GM12878 (cell line): ENCODE measurements at regions of chr6 and their contacts with region 1.

Region 1: DNA sequence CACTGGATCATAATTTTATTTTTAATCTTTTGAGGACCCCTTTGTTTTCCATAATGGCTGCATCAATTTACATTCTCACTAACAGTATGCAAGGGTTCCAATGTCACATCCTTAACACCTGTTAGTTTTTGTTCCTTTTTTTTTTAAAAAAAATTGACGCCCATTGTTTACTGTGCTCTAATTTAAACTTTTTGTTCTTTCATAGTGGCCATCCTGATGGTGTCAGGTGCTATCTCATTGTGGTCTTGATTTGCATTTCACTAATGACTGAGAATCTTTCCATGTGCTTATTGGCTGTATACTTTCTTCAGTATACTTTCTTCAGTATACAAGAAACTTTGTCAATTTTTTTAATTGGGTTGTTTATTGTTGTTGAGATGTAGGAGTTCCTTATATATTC is 347.0 kb downstream of the RNGTT start:
- DNase-seq: no peak
- ATAC-seq: peak; percentile 78
- H3K4me3 ChIP-seq: peak overlapping the region; percentile 9; the same call in 1 of the 2 replicates
- H3K27ac ChIP-seq: peak overlapping the region; percentile 62
- H3K4me1 ChIP-seq: peaks cover 15% of the 10 kb centered on the region; the same call in 1 of the 2 replicates
- H3K27me3 ChIP-seq: no peaks in the 10 kb centered on the region
- CTCF ChIP-seq: no peak
- EP300 ChIP-seq: peak; percentile 44 to 90; a peak in 3 of 4 replicates
- POLR2A ChIP-seq: no peak
- RAD21 ChIP-seq: no peak

Region 2: DNA sequence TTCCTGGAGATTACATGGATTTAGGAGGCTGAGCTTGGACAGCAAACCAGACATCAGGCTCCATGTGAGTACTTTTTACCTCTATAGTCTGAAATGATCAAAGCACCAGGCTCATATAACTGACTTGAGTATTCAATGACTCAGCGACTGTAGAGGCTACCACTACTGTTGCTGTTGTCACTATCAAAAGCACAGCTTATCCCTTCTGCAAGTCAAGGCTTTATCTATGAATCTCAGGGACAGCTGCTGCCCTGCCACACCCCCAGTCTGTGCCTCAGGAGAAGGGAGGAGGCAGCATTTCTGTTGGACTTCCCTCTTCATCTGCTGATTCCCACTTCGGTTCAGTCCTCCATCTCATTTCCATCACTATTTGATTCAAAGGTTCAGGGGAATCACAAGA is 369.7 kb before region 1 on chr6:
- CTCF ChIA-PET with region 1: no interaction called
- POLR2A ChIA-PET with region 1: no interaction called
- RAD21 ChIA-PET with region 1: no interaction called
- SMC1A ChIA-PET with region 1: no interaction called
- in situ Hi-C with region 1: no loop called
- intact Hi-C with region 1: loop called (anchors 10 kb)
- DNase-seq: no peak
- ATAC-seq: no peak
- H3K4me3 ChIP-seq: no peak overlapping the region
- H3K27ac ChIP-seq: no peak overlapping the region
- H3K4me1 ChIP-seq: no peaks in the 10 kb centered on the region
- H3K27me3 ChIP-seq: no peaks in the 10 kb centered on the region
- CTCF ChIP-seq: no peak
- EP300 ChIP-seq: no peak
- POLR2A ChIP-seq: no peak
- RAD21 ChIP-seq: no peak

Region 3: DNA sequence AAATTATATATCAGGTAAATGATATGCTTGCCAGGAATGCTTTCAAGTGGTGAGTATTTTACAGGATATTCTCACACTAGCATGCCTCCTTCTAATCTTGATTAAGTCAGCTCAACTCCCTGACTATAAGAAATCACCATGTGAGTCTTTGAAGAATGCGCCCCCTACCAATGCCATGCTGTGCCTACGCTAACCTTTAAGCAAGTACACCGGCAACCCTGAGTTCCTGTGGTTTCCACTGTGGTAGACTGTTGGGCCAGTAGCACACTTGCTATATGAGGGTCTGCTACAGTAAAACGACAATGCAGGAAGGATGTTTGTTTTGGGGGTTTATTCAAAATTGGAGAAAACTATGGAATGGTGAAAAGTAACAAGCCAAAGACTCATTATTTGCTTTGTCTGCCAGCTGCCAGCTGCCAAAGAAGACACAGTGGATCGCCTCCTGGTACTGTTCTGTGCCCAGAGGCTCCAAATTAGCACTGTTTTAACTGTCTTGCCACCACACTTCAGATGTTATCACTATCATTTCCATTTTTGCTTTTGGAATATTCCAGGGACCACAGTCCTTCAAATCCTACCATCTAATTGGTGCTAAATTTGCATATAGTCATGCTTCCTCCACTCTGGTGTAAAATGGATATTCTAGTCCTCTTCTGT is 13.6 kb after region 1 on chr6:
- CTCF ChIA-PET with region 1: interaction called, 8 read pairs
- POLR2A ChIA-PET with region 1: interaction called, 5 read pairs
- RAD21 ChIA-PET with region 1: no interaction called
- SMC1A ChIA-PET with region 1: interaction called, 21 read pairs
- in situ Hi-C with region 1: no loop called
- intact Hi-C with region 1: no loop called
- DNase-seq: no peak
- ATAC-seq: peak; percentile 84
- H3K4me3 ChIP-seq: no peak overlapping the region
- H3K27ac ChIP-seq: no peak overlapping the region; the same call in 1 of the 2 replicates
- H3K4me1 ChIP-seq: peaks cover 7% of the 10 kb centered on the region; the same call in 1 of the 2 replicates
- H3K27me3 ChIP-seq: no peaks in the 10 kb centered on the region
- CTCF ChIP-seq: peak; percentile 14 to 28 (median 23); a peak in 3 of 6 replicates
- EP300 ChIP-seq: no peak
- POLR2A ChIP-seq: no peak
- RAD21 ChIP-seq: peak; percentile 39; the same call in 1 of the 2 replicates

Region 4: GRCh38 chr6:88662163-88662580 is 45.8 kb after region 1 on chr6:
- CTCF ChIA-PET with region 1: no interaction called
- POLR2A ChIA-PET with region 1: no interaction called
- RAD21 ChIA-PET with region 1: interaction called, 3 read pairs
- SMC1A ChIA-PET with region 1: interaction called, 3 read pairs
- in situ Hi-C with region 1: no loop called
- intact Hi-C with region 1: loop called (anchors 2 kb)
- DNase-seq: peak; percentile 89
- ATAC-seq: peak; percentile 88
- H3K4me3 ChIP-seq: no peak overlapping the region
- H3K27ac ChIP-seq: peak overlapping the region; percentile 39
- H3K4me1 ChIP-seq: peaks cover 17% of the 10 kb centered on the region
- H3K27me3 ChIP-seq: no peaks in the 10 kb centered on the region
- CTCF ChIP-seq: no peak
- EP300 ChIP-seq: peak in 1 of 2 experiments; percentile 69; a peak in 2 of 4 replicates
- POLR2A ChIP-seq: no peak
- RAD21 ChIP-seq: no peak

Region 5: DNA sequence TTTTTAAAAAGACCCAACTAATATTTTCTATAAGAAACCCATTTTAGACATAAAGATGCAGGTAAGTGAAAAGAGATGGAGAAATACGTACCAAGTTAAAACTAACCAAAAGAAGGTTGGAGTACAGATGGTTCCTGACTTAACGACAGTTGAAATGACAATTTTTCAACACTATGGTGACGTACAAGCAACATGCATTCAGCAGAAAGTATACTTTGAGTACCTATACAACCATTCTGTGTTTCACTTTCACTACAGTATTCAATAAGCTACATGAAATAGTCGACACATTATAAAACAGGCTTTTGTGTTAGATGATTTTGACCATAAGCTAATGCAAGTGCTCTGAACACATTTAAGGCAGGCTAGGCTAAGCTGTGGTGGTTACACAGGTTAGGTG is 118.2 kb after region 1 on chr6:
- CTCF ChIA-PET with region 1: no interaction called
- POLR2A ChIA-PET with region 1: no interaction called
- RAD21 ChIA-PET with region 1: no interaction called
- SMC1A ChIA-PET with region 1: no interaction called
- in situ Hi-C with region 1: no loop called
- intact Hi-C with region 1: no loop called
- DNase-seq: no peak
- ATAC-seq: no peak
- H3K4me3 ChIP-seq: no peak overlapping the region
- H3K27ac ChIP-seq: peak overlapping the region; percentile 3; the same call in 1 of the 2 replicates
- H3K4me1 ChIP-seq: no peaks in the 10 kb centered on the region; the same call in 1 of the 2 replicates
- H3K27me3 ChIP-seq: no peaks in the 10 kb centered on the region
- CTCF ChIP-seq: no peak
- EP300 ChIP-seq: no peak
- POLR2A ChIP-seq: no peak
- RAD21 ChIP-seq: no peak